MCF 10A (cell line): ENCODE measurements at regions of chr19 and their contacts with region 1.

Region 1: DNA sequence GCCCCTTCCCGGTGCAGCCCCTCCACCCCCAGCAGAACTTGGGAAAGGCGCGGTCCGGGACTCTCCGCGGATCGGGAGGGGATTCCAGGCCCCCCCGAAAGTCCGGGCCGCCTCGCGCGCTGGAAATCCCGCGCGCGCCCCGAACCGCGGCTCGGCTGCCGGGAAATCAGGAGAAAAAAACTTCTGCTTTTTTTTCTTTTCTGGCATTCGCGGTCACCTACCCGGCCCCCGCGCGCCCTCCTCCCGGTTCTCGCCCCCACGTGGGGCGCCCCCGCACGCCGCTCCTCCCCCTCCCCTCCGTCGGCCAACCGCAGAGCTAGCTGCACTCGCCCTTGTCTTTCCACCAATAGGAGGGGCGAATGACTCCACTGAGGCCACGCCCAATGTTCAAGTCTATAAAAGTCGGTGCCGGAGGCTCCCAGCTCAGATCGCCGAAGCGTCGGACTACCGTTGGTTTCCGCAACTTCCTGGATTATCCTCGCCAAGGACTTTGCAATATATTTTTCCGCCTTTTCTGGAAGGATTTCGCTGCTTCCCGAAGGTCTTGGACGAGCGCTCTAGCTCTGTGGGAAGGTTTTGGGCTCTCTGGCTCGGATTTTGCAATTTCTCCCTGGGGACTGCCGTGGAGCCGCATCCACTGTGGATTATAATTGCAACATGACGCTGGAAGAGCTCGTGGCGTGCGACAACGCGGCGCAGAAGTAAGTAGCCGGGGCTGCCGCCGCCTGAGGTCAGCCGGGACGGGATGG is at the start of gene GADD45B:
- DNase-seq: peak; percentile 98
- H3K4me3 Mint-ChIP-seq: peak within 1 kb of the TSS; percentile 98
- H3K27ac Mint-ChIP-seq: peak within 1 kb of the TSS; percentile 89
- H3K4me1 Mint-ChIP-seq: peaks cover 9% of the 10 kb centered on the region
- H3K27me3 Mint-ChIP-seq: no peaks in the 10 kb centered on the region
- CTCF ChIP-seq: no peak
- total RNA-seq, gene GADD45B: 28.0 and 53.8 TPM in 2 replicates

Region 2: DNA sequence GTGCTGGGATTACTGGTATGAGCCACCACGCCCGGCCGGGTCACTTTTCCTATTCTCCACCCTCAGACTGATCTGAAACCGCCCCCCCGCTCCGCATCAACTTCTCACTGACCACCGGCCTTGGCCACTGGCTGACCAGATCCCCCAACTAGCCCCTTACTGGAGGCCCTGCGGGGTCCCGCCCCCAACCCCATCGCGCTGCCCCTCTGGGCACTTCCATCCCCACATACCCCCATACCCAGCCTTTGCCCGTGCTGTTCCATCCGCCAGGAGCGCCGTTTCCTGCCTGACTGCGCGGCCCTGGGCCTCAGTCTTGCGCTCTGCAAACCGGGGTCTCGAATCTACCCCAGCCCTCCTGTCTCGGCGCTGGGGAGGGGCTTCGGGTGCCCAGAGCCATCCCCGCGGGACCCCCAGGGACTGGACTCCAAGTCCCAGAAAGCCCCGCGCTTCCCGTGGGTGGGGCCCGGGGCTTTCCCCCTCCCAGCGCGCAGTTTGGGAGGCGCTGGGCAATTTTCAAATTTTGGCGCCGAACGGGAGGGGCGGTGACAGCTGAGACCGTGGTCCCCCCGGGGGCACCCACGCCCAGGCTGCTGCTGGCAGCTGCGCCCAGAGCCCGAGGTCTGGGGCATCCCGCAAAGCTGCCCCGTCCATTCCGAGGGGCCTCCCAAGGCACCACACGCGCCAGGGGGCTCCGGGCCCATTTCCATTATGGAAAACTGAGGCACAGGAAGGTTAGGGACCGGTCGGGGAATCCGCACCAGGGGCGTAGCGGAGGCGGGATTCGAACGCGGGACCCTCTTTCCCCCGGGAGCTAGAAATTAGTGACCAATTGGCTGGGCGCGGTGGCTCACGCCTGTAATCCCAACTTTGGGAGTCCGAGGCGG is 13.9 kb before region 1 on chr19:
- CTCF ChIA-PET with region 1: no interaction called
- POLR2A ChIA-PET with region 1: interaction called, 26 read pairs
- intact Hi-C with region 1: no loop called
- DNase-seq: peak; percentile 90
- H3K4me3 Mint-ChIP-seq: peak overlapping the region; percentile 91
- H3K27ac Mint-ChIP-seq: no peak overlapping the region
- H3K4me1 Mint-ChIP-seq: peaks cover 16% of the 10 kb centered on the region
- H3K27me3 Mint-ChIP-seq: no peaks in the 10 kb centered on the region
- CTCF ChIP-seq: peak; percentile 21

Region 3: GRCh38 chr19:2532252-2533071 is 56.6 kb after region 1 on chr19:
- CTCF ChIA-PET with region 1: interaction called, 6 read pairs
- POLR2A ChIA-PET with region 1: interaction called, 72 read pairs
- intact Hi-C with region 1: no loop called
- DNase-seq: peak; percentile 95
- H3K4me3 Mint-ChIP-seq: peak overlapping the region; percentile 0
- H3K27ac Mint-ChIP-seq: peak overlapping the region; percentile 87
- H3K4me1 Mint-ChIP-seq: peaks cover 36% of the 10 kb centered on the region
- H3K27me3 Mint-ChIP-seq: no peaks in the 10 kb centered on the region
- CTCF ChIP-seq: no peak

Region 4: GRCh38 chr19:2602391-2603181 is 126.7 kb after region 1 on chr19:
- CTCF ChIA-PET with region 1: interaction called, 7 read pairs
- POLR2A ChIA-PET with region 1: interaction called, 34 read pairs
- intact Hi-C with region 1: no loop called
- DNase-seq: peak; percentile 62
- H3K4me3 Mint-ChIP-seq: peak overlapping the region; percentile 27
- H3K27ac Mint-ChIP-seq: peak overlapping the region; percentile 43
- H3K4me1 Mint-ChIP-seq: peaks cover 6% of the 10 kb centered on the region
- H3K27me3 Mint-ChIP-seq: peaks cover 3% of the 10 kb centered on the region
- CTCF ChIP-seq: no peak

Region 5: GRCh38 chr19:2627319-2627829 is 151.5 kb after region 1 on chr19:
- CTCF ChIA-PET with region 1: interaction called, 5 read pairs
- POLR2A ChIA-PET with region 1: interaction called, 68 read pairs
- intact Hi-C with region 1: loop called (anchors 5 kb)
- DNase-seq: peak; percentile 98
- H3K4me3 Mint-ChIP-seq: peak overlapping the region; percentile 45
- H3K27ac Mint-ChIP-seq: peak overlapping the region; percentile 90
- H3K4me1 Mint-ChIP-seq: peaks cover 22% of the 10 kb centered on the region
- H3K27me3 Mint-ChIP-seq: no peaks in the 10 kb centered on the region
- CTCF ChIP-seq: no peak

Region 6: DNA sequence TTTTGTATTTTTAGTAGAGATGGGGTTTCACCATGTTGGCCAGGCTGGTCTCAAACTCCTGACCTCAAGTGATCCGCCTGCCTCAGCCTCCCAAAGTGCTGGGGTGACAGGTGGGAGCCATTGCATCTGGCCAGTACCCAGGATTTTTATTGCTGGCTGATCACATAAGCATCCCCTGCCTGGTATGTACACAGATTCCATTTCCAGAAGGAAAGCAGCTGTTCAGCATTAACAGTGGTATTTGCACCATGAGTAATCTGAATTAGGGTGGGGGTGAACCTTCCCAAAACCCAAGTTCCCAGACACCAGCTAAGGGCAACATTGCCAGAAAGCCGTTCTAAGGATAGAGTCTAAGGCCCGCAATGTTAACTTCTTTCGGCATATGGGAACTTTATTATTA is 372.7 kb after region 1 on chr19:
- CTCF ChIA-PET with region 1: no interaction called
- POLR2A ChIA-PET with region 1: no interaction called
- intact Hi-C with region 1: no loop called
- DNase-seq: no peak
- H3K4me3 Mint-ChIP-seq: no peak overlapping the region
- H3K27ac Mint-ChIP-seq: no peak overlapping the region
- H3K4me1 Mint-ChIP-seq: no peaks in the 10 kb centered on the region
- H3K27me3 Mint-ChIP-seq: no peaks in the 10 kb centered on the region
- CTCF ChIP-seq: no peak